IMR-90 (cell line): ENCODE measurements at regions of chr4 and their contacts with region 1.

Region 1: DNA sequence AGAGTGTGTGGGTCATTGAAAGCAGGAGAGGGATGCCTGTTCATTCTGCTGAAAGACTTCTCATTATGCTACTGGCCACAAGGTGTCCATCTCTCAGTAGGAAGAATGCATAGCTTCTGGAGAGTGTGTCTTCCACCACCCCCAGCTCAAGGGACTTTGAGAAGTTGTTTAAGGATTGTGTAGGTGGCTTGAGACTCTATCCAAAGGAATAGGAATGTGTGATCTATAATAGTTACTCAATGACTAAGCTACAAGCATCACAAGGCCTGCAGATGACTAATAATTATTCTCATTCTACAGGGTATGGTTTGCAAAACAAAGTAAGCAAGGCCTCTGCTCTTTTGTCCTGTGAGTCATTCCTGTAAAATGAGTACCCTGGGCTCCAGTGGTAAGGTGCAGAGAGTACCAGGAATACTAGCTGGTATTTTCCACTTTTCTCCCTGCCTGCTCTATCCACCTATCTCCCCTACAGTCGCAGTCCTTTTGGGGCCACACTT is 279.8 kb upstream of the BOD1L1 start:
- DNase-seq: peak; percentile 99
- ATAC-seq: peak; percentile 87
- H3K4me3 ChIP-seq: no peak overlapping the region
- H3K27ac ChIP-seq: peak overlapping the region; percentile 98
- H3K4me1 ChIP-seq: peaks cover 15% of the 10 kb centered on the region
- H3K27me3 ChIP-seq: no peaks in the 10 kb centered on the region
- CTCF ChIP-seq: peak; percentile 60
- POLR2A ChIP-seq: peak; percentile 52; the same call in 1 of the 2 replicates
- RAD21 ChIP-seq: peak; percentile 81

Region 2: DNA sequence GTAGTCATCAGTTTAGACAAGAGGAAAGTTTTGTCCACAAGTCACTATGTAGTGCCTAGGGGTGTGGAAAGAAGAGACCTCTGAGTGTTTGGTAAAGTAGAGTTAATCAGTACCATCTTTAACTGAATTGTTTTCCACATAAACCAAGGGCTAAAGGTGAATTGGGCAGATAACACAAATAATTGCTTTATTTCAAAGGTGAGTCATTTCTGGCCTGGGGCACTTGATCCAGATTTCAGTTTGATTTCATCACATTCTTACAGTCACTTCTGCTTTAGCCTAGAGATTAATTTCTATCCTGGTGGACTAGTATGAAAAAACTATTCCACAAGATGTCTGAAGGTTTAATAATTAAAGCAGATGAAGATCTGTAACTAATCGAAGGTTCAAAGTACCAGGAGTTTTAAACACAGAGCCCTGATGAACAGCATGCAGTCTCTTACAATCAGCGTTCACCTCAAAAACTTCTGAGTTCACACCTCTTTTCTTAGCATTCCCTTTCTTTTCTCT is 205.3 kb before region 1 on chr4:
- CTCF ChIA-PET with region 1: no interaction called
- POLR2A ChIA-PET with region 1: no interaction called
- dilution Hi-C with region 1: no loop called
- in situ Hi-C with region 1: no loop called
- intact Hi-C with region 1: loop called (anchors 5 kb)
- DNase-seq: peak; percentile 62
- ATAC-seq: peak; percentile 24; the same call in 1 of the 2 replicates
- H3K4me3 ChIP-seq: no peak overlapping the region
- H3K27ac ChIP-seq: no peak overlapping the region
- H3K4me1 ChIP-seq: peaks cover 4% of the 10 kb centered on the region
- H3K27me3 ChIP-seq: no peaks in the 10 kb centered on the region
- CTCF ChIP-seq: no peak
- POLR2A ChIP-seq: no peak
- RAD21 ChIP-seq: no peak

Region 3: GRCh38 chr4:13829457-13829856 is 77.8 kb before region 1 on chr4:
- CTCF ChIA-PET with region 1: no interaction called
- POLR2A ChIA-PET with region 1: no interaction called
- dilution Hi-C with region 1: no loop called
- in situ Hi-C with region 1: no loop called
- intact Hi-C with region 1: loop called (anchors 2 kb)
- DNase-seq: peak; percentile 12
- ATAC-seq: peak; percentile 29; the same call in 1 of the 2 replicates
- H3K4me3 ChIP-seq: no peak overlapping the region
- H3K27ac ChIP-seq: no peak overlapping the region
- H3K4me1 ChIP-seq: no peaks in the 10 kb centered on the region
- H3K27me3 ChIP-seq: no peaks in the 10 kb centered on the region
- CTCF ChIP-seq: no peak
- POLR2A ChIP-seq: no peak
- RAD21 ChIP-seq: no peak

Region 4: GRCh38 chr4:13892739-13893105 is 14.6 kb before region 1 on chr4:
- CTCF ChIA-PET with region 1: interaction called, 3 read pairs
- POLR2A ChIA-PET with region 1: interaction called, 3 read pairs
- dilution Hi-C with region 1: no loop called
- in situ Hi-C with region 1: no loop called
- intact Hi-C with region 1: loop called (anchors 1 kb)
- DNase-seq: peak; percentile 65
- ATAC-seq: peak; percentile 42
- H3K4me3 ChIP-seq: no peak overlapping the region; the same call in 1 of the 2 replicates
- H3K27ac ChIP-seq: peak overlapping the region; percentile 96
- H3K4me1 ChIP-seq: peaks cover 28% of the 10 kb centered on the region
- H3K27me3 ChIP-seq: no peaks in the 10 kb centered on the region
- CTCF ChIP-seq: no peak
- POLR2A ChIP-seq: 0 out of 2 replicates have a peak, but pooled peaks have one; percentile 19
- RAD21 ChIP-seq: no peak

Region 5: DNA sequence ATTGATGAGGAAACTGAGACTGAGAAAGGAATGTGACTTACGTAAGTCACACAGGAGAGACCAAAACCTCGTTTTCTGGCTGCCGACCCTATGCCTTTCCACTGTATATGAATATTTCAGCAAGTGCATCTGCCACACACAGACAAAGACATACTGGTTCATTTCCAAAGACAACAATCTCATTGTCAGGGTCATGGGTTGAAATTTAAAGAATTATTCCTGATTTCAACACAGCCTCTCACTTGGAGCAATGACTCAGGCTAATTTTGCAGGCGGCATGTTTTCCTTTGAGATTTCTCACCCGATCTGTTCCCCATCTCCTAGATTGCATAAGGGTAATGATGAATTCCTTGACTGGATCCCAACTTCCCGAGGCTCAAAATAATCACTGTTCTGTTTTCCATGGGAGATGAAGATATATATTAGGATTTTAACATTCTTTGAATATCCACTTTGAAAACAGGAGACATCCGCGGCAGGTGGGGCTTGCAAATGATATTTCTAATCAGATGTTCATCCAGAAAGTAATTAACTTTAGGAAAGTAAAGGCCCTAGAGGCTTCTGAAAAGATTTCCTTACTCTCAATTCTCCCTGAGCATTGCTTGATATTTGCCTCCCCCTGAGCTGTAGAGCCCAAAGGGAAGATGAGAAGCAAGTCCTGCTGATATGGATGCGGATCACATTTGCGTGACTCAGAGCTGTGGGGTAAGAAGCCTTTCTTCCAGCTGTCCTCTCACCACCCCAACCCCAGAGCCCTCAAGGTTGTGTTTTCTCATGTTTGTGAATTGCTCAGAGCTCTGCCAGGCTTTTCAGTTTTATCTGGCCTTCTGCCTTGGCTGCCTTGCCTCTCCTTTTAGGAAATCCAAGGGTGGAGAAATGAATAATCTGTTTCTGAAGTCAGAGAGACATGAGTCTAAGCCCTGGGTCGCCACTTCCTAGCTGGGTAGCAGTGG is 81.3 kb after region 1 on chr4:
- CTCF ChIA-PET with region 1: no interaction called
- POLR2A ChIA-PET with region 1: no interaction called
- dilution Hi-C with region 1: no loop called
- in situ Hi-C with region 1: no loop called
- intact Hi-C with region 1: loop called (anchors 5 kb)
- DNase-seq: peak; percentile 97
- ATAC-seq: peak; percentile 73
- H3K4me3 ChIP-seq: no peak overlapping the region
- H3K27ac ChIP-seq: peak overlapping the region; percentile 39
- H3K4me1 ChIP-seq: peaks cover 18% of the 10 kb centered on the region
- H3K27me3 ChIP-seq: no peaks in the 10 kb centered on the region
- CTCF ChIP-seq: no peak
- POLR2A ChIP-seq: no peak
- RAD21 ChIP-seq: no peak; the same call in 1 of the 2 replicates

Region 6: GRCh38 chr4:14566518-14566917 is 659.2 kb after region 1 on chr4:
- CTCF ChIA-PET with region 1: no interaction called
- POLR2A ChIA-PET with region 1: no interaction called
- dilution Hi-C with region 1: no loop called
- in situ Hi-C with region 1: no loop called
- intact Hi-C with region 1: loop called (anchors 5 kb)
- DNase-seq: peak; percentile 0
- ATAC-seq: no peak
- H3K4me3 ChIP-seq: no peak overlapping the region
- H3K27ac ChIP-seq: no peak overlapping the region
- H3K4me1 ChIP-seq: no peaks in the 10 kb centered on the region
- H3K27me3 ChIP-seq: no peaks in the 10 kb centered on the region
- CTCF ChIP-seq: no peak
- POLR2A ChIP-seq: no peak
- RAD21 ChIP-seq: no peak